HAP-1 (cell line): ENCODE measurements at regions of chr1 and their contacts with region 1.

Region 1: DNA sequence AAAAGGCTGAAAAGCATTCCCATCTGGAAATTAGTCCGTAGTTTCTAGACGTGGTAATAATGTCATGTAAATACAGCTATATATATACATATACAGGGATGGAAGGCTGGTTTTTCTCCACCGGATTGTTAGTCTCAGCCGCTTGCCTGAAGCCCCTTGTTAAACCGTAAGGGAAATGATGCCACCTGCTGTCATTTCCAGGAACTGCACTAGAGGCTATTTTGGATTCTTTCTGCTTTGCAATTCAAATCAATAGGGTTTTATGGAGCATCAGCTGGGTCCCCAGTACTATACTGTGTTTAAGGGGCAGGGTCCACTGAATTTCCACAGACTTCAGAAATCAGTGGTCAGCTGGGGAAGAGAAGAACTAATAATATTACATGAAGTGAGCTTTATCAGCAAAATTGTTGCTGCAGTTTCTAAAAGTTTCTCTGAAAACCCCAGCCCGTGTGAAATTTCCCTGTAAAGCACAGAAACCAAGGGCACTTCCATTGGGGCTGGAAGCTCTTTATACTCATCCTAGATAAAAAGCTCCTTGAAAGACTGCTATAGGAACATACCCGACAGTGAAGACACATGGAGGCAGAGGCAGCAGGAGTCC is 33.8 kb upstream of the MPZL1 start:
- DNase-seq: peak; percentile 57 to 87
- H3K4me3 ChIP-seq: no peak overlapping the region
- H3K4me1 ChIP-seq: no peaks in the 10 kb centered on the region
- H3K27me3 ChIP-seq: no peaks in the 10 kb centered on the region; the same call in 1 of the 2 replicates

Region 2: GRCh38 chr1:167066333-167067122 is 621.5 kb before region 1 on chr1:
- in situ Hi-C with region 1: loop called (anchors 10 kb)
- DNase-seq: peak; percentile 52 to 88
- H3K4me3 ChIP-seq: no peak overlapping the region
- H3K4me1 ChIP-seq: no peaks in the 10 kb centered on the region
- H3K27me3 ChIP-seq: peaks cover 3% of the 10 kb centered on the region; the same call in 1 of the 2 replicates

Region 3: GRCh38 chr1:167273027-167273800 is 414.8 kb before region 1 on chr1:
- in situ Hi-C with region 1: loop called (anchors 25 kb)
- DNase-seq: peak; percentile 59 to 60
- H3K4me3 ChIP-seq: no peak overlapping the region
- H3K4me1 ChIP-seq: peaks cover 13% of the 10 kb centered on the region
- H3K27me3 ChIP-seq: no peaks in the 10 kb centered on the region

Region 4: DNA sequence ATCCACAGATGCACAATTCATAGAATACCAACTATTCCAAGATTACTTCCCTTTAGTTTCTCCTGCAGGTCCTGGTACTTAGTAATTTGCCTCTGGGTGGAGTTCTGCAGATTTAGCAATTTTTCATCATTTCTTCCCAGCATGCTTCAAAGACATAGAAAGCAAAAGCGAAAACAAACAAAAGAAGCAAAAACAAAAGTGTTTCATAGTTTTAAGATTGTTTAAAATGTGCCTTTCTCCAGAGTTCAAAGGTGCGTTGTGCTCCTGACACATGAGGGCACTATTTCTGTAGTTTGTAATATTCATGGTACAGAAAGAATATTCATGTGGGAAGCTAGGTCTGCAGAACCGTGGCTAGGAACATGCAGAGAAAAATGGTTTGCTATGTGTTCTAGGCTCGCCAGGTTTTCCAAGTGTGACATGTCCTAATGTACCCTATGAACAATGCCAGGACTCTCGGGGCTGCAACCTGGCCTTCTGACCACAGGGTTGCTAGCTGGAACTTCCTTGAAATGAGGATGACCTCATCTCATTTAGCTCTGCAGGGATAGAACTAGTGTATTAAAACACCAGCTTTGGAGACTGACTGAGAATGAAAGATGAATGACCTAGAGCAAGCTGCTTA is 88.0 kb before region 1 on chr1:
- in situ Hi-C with region 1: no loop called
- DNase-seq: no peak
- H3K4me3 ChIP-seq: no peak overlapping the region
- H3K4me1 ChIP-seq: no peaks in the 10 kb centered on the region
- H3K27me3 ChIP-seq: no peaks in the 10 kb centered on the region

Region 5: DNA sequence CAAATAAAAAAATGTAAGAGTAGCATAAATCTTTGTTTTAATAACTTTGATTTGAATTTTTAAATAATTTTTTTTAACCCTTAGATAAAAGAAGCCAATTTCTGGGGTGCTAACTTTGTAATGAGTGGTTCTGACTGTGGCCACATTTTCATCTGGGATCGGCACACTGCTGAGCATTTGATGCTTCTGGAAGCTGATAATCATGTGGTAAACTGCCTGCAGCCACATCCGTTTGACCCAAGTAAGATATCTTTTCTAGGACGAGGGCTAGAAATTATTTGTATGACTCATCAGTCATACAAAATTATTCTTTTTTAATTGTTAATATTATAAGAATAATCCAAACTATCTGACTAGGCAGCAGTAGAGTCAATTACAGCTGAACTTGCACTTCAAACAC is 377.5 kb after region 1 on chr1:
- in situ Hi-C with region 1: no loop called
- DNase-seq: no peak
- H3K4me3 ChIP-seq: no peak overlapping the region
- H3K4me1 ChIP-seq: no peaks in the 10 kb centered on the region
- H3K27me3 ChIP-seq: no peaks in the 10 kb centered on the region